ENCODE measurements at regions of chr1 and their contacts with region 1.

Region 1: DNA sequence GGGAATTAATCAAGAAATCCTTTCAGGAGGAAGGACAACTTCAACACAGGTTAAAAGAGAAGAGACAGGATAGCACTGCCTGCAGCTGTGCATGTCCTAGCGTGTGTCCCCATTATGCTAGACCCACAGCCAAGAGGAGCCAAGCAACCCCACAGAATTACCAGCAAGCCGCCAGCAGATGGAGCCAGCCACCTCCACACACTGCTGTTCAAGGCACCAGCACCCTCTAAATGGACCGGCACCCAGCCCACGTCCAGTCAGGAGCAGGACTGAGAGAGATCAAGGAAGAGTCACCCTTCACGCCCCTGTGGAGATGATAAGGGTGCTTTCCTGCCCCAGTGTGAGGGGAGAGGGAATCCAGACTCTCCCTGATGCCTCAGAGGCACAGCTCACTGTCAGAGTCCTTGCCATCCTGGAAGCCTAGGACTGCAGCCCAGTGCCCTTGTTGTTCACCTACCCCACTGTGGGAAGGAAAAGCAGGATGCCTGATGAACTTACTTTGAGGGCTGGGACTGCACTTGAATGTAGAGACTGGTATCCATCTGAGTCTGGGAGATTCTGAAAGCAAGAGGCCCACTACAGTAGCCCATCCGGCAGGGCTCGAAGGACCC is 37.1 kb upstream of the CTTNBP2NL start:
- DNase-seq: no peak
- ATAC-seq: peak; percentile 96
- H3K4me3 ChIP-seq: no peak overlapping the region
- H3K27ac ChIP-seq: no peak overlapping the region
- H3K4me1 ChIP-seq: peaks cover 6% of the 10 kb centered on the region; the same call in 1 of the 2 replicates
- H3K27me3 ChIP-seq: no peaks in the 10 kb centered on the region; a peak in 1 of 4 replicates
- CTCF ChIP-seq: peak; percentile 78 to 81 (median 78)
- EP300 ChIP-seq: no peak
- POLR2A ChIP-seq: no peak
- RAD21 ChIP-seq: peak; percentile 63

Region 2: GRCh38 chr1:112381324-112382076 is 22.6 kb after region 1 on chr1:
- CTCF ChIA-PET with region 1: interaction called, 10 read pairs
- POLR2A ChIA-PET with region 1: no interaction called
- RAD21 ChIA-PET with region 1: no interaction called
- SMC1A ChIA-PET with region 1: no interaction called
- in situ Hi-C with region 1: no loop called
- intact Hi-C with region 1: no loop called
- DNase-seq: no peak
- ATAC-seq: no peak
- H3K4me3 ChIP-seq: no peak overlapping the region
- H3K27ac ChIP-seq: no peak overlapping the region
- H3K4me1 ChIP-seq: no peaks in the 10 kb centered on the region
- H3K27me3 ChIP-seq: peaks cover 0 to 4% of the 10 kb centered on the region in 2 experiments; a peak in 1 of 4 replicates
- CTCF ChIP-seq: no peak
- EP300 ChIP-seq: no peak
- POLR2A ChIP-seq: no peak
- RAD21 ChIP-seq: no peak

Region 3: DNA sequence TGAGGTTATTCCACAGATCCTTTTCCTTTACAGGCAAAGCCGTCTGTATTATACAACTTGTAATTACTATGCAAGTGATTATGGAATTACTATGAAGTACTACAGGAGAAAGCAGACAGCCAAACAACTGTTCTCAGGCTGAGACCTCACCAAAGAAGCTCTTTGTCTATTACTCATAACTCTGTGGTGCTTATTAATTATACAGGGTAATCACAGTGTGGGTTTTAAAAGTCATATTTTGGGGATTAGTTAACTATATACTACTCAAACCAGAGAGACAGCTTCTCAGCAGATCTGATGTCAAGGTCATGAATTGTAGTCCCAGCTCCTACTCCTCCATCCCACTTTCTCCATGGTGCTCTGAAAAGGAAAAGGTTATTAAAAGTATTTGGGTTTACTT is 86.7 kb after region 1 on chr1:
- CTCF ChIA-PET with region 1: no interaction called
- POLR2A ChIA-PET with region 1: no interaction called
- RAD21 ChIA-PET with region 1: no interaction called
- SMC1A ChIA-PET with region 1: no interaction called
- in situ Hi-C with region 1: no loop called
- intact Hi-C with region 1: no loop called
- DNase-seq: no peak
- ATAC-seq: no peak
- H3K4me3 ChIP-seq: no peak overlapping the region
- H3K27ac ChIP-seq: no peak overlapping the region
- H3K4me1 ChIP-seq: no peaks in the 10 kb centered on the region
- H3K27me3 ChIP-seq: no peaks in the 10 kb centered on the region
- CTCF ChIP-seq: no peak
- EP300 ChIP-seq: no peak
- POLR2A ChIP-seq: no peak
- RAD21 ChIP-seq: no peak

Region 4: DNA sequence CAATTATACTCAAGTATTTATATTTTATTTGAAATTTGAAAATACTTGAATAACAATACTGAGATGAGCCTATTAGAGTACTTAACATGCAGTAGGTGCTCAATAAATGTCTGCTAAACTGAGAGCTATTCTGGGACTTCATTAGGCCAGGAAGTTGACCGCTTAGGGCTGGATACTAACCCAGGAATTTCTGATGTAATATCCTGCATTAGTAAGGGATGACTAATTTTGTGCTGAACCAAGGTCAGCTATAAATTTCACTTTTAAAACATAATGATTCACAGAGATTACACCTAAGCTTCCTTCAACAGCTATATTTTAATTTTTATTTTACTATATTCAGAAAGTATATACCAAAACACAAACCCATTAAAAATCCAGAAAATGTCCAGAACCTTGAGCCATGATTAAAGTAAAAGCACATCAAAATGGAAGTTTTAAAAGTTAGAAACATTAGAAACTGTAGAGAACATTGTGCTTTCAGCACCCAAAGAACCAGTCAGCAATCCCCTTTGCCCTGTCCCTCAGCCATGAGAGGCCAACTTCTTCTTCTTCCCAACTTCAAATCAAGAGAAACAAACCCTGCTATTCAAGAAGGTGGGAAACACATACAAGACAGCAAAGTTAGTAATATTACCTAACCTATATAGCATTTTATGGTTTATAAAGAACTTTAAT is 185.2 kb after region 1 on chr1:
- CTCF ChIA-PET with region 1: no interaction called
- POLR2A ChIA-PET with region 1: no interaction called
- RAD21 ChIA-PET with region 1: no interaction called
- SMC1A ChIA-PET with region 1: no interaction called
- in situ Hi-C with region 1: no loop called
- intact Hi-C with region 1: no loop called
- DNase-seq: no peak
- ATAC-seq: no peak; the same call in 2 of the 3 replicates
- H3K4me3 ChIP-seq: no peak overlapping the region
- H3K27ac ChIP-seq: no peak overlapping the region
- H3K4me1 ChIP-seq: no peaks in the 10 kb centered on the region
- H3K27me3 ChIP-seq: no peaks in the 10 kb centered on the region
- CTCF ChIP-seq: no peak
- EP300 ChIP-seq: no peak
- POLR2A ChIP-seq: no peak
- RAD21 ChIP-seq: no peak

Measured in GM12878 (cell line).